PC-9 (cell line): ENCODE measurements at regions of chr4 and their contacts with region 1.

Region 1: GRCh38 chr4:184649026-184649970 is at the starts of genes CASP3 and PRIMPOL:
- DNase-seq: peak; percentile 66 to 97
- H3K4me3 ChIP-seq: peak within 1 kb of the TSS; percentile 83
- H3K27ac ChIP-seq: peak within 1 kb of the TSS; percentile 73
- H3K4me1 ChIP-seq: peaks cover 20% of the 10 kb centered on the region
- H3K27me3 ChIP-seq: no peaks in the 10 kb centered on the region
- CTCF ChIP-seq: no peak
- total RNA-seq, gene CASP3: 33.5 and 35.7 TPM in 2 replicates
- total RNA-seq, gene PRIMPOL: 23.2 and 29.5 TPM in 2 replicates

Region 2: GRCh38 chr4:184400375-184400870 is 248.9 kb before region 1 on chr4:
- CTCF ChIA-PET with region 1: no interaction called
- POLR2A ChIA-PET with region 1: no interaction called
- intact Hi-C with region 1: loop called (anchors 10 kb)
- DNase-seq: peak; percentile 42 to 84
- H3K4me3 ChIP-seq: no peak overlapping the region
- H3K27ac ChIP-seq: peak overlapping the region; percentile 83
- H3K4me1 ChIP-seq: peaks cover 14% of the 10 kb centered on the region
- H3K27me3 ChIP-seq: no peaks in the 10 kb centered on the region
- CTCF ChIP-seq: no peak

Region 3: DNA sequence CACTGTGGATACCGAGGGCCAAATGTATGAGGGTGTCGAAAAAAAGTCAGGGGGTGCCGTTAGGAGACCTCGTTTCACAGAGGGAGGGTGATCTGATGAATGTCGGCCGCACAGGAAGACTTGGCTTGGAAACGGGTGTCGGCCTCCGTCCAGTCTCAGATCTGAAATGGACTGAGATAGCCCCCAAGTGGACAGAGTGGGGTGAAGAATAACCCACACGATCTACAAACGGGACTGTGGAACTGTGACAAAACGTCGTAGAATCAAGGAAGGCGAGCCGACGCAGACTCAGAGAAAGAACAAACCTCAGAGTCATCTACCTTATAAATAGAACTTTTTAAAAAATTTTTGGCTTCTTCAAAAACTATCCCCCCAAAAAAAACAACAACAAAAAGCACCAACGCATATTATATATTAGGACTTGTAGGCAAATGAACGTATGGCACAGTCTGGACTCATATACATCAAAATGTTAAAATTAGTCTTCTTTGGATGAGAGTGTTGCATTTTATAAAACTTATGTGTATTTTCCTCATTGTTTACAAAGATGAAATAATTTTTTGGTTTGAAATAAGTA is 111.2 kb before region 1 on chr4:
- CTCF ChIA-PET with region 1: no interaction called
- POLR2A ChIA-PET with region 1: interaction called, 4 read pairs
- intact Hi-C with region 1: loop called (anchors 1 kb)
- DNase-seq: peak; percentile 65 to 71
- H3K4me3 ChIP-seq: peak overlapping the region; percentile 67
- H3K27ac ChIP-seq: peak overlapping the region; percentile 66
- H3K4me1 ChIP-seq: no peaks in the 10 kb centered on the region; the same call in 1 of the 2 replicates
- H3K27me3 ChIP-seq: no peaks in the 10 kb centered on the region
- CTCF ChIP-seq: peak; percentile 67

Region 4: DNA sequence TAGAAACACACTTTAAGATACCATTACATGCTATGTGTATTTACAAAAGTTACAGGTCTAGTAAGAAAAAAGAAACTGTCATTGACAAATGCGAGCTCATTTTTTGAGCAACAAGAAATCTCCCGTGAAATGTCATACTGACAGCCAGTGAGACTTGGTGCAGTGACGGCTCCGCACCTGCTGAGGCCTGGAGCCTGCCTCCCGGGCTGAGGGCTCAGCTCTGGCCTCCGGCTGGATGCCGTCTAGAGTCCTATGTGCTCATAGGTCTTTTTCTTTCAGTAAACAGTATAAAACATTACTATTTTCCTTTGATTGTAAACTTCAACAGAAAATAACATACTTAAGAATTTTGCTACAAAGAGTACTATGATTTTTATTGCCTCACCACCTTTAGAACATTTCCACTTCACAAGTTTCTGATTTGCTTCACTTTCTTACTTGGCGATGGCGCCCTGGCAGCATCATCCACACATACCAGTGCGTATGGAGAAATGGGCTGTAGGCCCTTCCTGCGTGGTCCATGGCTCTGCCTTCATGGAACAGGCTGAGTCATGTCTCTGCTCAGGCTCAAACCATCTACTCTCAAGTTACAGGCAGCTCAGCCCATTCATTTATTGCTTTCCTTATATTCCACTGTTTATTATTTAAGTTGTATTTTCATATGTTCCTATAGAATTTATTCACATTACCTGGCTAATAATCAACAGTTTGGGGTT is 21.4 kb before region 1 on chr4:
- CTCF ChIA-PET with region 1: no interaction called
- POLR2A ChIA-PET with region 1: interaction called, 12 read pairs
- intact Hi-C with region 1: no loop called
- DNase-seq: no peak
- H3K4me3 ChIP-seq: no peak overlapping the region
- H3K27ac ChIP-seq: no peak overlapping the region
- H3K4me1 ChIP-seq: peaks cover 9% of the 10 kb centered on the region; the same call in 1 of the 2 replicates
- H3K27me3 ChIP-seq: no peaks in the 10 kb centered on the region
- CTCF ChIP-seq: no peak

Region 5: GRCh38 chr4:184722798-184723197 is 73.5 kb after region 1 on chr4:
- CTCF ChIA-PET with region 1: no interaction called
- POLR2A ChIA-PET with region 1: interaction called, 15 read pairs
- intact Hi-C with region 1: no loop called
- DNase-seq: no peak
- H3K4me3 ChIP-seq: no peak overlapping the region
- H3K27ac ChIP-seq: no peak overlapping the region
- H3K4me1 ChIP-seq: no peaks in the 10 kb centered on the region
- H3K27me3 ChIP-seq: no peaks in the 10 kb centered on the region
- CTCF ChIP-seq: 0 out of 2 replicates have a peak, but pooled peaks have one; percentile 23

Region 6: DNA sequence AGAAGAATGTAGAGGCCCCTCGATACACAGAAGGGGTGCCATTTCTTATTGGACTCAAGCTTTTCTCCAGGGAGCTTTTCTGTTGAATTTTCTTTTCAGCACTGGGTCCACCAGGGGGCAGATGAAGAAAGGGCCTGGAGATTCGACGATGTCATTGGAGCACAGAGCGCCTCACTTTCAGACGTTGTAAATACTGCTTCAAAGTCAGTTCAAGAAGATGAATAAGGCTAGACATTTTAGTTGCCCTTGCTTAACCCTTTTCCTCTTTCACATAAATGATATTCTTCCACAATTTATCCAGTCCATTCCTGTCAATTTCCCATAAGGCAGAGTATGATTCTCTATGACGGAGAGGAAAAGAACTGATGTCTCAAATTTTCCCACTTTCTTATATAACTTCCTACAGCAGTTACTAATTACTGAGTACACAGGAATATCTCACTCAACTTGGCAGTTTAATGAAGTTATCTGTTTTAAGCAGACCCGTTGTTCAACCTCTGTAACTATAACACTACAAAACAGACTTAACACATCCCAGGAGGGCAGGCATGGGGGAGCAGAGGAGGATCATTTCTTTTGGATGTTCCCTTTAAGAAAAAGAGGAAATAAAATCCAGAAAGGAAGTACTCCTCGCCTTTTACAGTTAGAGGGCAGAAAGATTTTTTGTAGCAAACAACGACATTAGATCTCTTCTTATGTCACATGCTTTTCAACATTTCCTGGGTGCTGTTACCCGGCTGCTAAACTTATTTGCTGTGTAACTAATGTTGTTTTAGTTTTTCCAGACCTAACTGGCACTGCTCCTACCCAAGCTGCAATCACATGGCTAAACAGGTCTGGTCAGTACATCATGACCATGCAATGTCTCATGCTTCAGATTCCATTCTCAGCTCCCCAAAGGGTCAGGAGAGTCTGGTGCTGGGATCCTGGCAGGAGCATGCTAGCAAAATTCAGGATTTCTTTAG is 96.8 kb after region 1 on chr4:
- CTCF ChIA-PET with region 1: interaction called, 6 read pairs
- POLR2A ChIA-PET with region 1: interaction called, 11 read pairs
- intact Hi-C with region 1: loop called (anchors 5 kb)
- DNase-seq: peak; percentile 64 to 88
- H3K4me3 ChIP-seq: peak overlapping the region; percentile 36; the same call in 1 of the 2 replicates
- H3K27ac ChIP-seq: peak overlapping the region; percentile 98
- H3K4me1 ChIP-seq: peaks cover 42% of the 10 kb centered on the region
- H3K27me3 ChIP-seq: no peaks in the 10 kb centered on the region
- CTCF ChIP-seq: peak; percentile 76

Region 7: DNA sequence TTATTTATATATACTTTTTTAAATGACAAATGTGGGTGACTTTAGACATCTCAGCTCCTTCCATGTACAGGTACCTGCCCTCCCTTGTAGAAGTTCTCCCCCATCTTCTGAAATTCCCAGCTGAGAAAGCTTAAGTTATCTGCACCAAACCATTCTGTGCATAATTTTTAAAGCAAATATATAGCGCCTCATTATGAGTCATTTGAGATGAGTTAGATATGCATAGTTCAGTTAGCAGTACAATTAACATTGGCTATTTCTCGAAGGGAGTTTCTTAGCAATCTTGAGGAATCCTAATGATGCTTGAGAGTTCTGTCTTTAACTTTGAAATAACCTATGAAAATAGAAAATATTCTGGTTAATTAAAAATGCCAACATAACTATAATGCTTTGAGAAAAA is 795.9 kb after region 1 on chr4:
- CTCF ChIA-PET with region 1: no interaction called
- POLR2A ChIA-PET with region 1: no interaction called
- intact Hi-C with region 1: no loop called
- DNase-seq: no peak
- H3K4me3 ChIP-seq: no peak overlapping the region
- H3K27ac ChIP-seq: no peak overlapping the region
- H3K4me1 ChIP-seq: no peaks in the 10 kb centered on the region
- H3K27me3 ChIP-seq: no peaks in the 10 kb centered on the region
- CTCF ChIP-seq: no peak